Activated T-helper 1 cell treated with anti-CD3 and anti-CD28 coated beads, Interleukin-12 subunit alpha, Interleukin-12 subunit beta, Interleukin-2, Interleukin-4 antibody, amounts not matched to agents 30 ng/mL and 10 ng/mL and 1 ng/mL, durations not matched to agents 14 hours and 24 hours and 36 hours (primary cell): ENCODE measurements at regions of chr17 and their contacts with region 1.

Region 1: GRCh38 chr17:8041249-8041928 is 2.5 kb downstream of the ALOX15B start:
- DNase-seq: peak; percentile 20
- H3K4me3 Mint-ChIP-seq: no peak overlapping the region
- H3K27ac Mint-ChIP-seq: no peak overlapping the region
- H3K4me1 Mint-ChIP-seq: no peaks in the 10 kb centered on the region
- H3K27me3 Mint-ChIP-seq: peaks cover 26% of the 10 kb centered on the region

Region 2: DNA sequence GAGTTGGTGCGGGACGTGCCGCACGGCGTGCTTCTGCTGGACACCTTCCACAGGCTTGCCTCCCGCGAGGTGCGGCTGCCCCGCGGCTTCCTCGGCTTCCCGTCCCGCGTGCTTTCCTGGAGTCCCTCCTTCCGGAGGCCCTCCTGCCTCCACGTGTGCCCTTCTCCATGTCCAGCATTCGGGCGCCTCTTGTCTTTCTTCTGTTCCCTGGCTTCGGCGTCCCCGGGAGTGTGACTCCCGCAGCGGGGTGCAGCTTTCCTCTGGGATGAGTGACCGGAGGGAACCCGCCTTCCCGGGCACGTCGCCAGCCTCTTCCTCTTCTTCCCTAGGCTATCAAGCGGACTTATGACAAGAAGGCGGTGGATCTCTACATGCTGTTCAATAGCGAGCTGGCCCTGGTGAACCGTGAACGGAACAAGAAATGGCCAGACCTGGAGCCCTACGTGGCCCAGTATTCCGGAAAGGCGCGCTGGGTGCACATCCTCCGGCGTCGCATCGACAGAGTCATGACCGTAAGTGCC is 300.8 kb before region 1 on chr17:
- intact Hi-C with region 1: loop called (anchors 1 kb)
- DNase-seq: no peak
- H3K4me3 Mint-ChIP-seq: no peak overlapping the region
- H3K27ac Mint-ChIP-seq: no peak overlapping the region
- H3K4me1 Mint-ChIP-seq: no peaks in the 10 kb centered on the region
- H3K27me3 Mint-ChIP-seq: peaks cover 17% of the 10 kb centered on the region

Region 3: GRCh38 chr17:8016632-8017478 is 24.5 kb before region 1 on chr17:
- intact Hi-C with region 1: loop called (anchors 1 kb)
- DNase-seq: peak; percentile 44
- H3K4me3 Mint-ChIP-seq: peak overlapping the region; percentile 81
- H3K27ac Mint-ChIP-seq: no peak overlapping the region
- H3K4me1 Mint-ChIP-seq: peaks cover 12% of the 10 kb centered on the region
- H3K27me3 Mint-ChIP-seq: peaks cover 30% of the 10 kb centered on the region